ENCODE measurements at regions of chr4 and their contacts with region 1.

Region 1: GRCh38 chr4:145936142-145936996 is 2.3 kb downstream of the ZNF827 start:
- DNase-seq: peak; percentile 74
- H3K4me3 Mint-ChIP-seq: peak overlapping the region; percentile 80
- H3K27ac Mint-ChIP-seq: peak overlapping the region; percentile 95
- H3K4me1 Mint-ChIP-seq: peaks cover 35% of the 10 kb centered on the region
- H3K27me3 Mint-ChIP-seq: no peaks in the 10 kb centered on the region
- CTCF ChIP-seq: no peak

Region 2: DNA sequence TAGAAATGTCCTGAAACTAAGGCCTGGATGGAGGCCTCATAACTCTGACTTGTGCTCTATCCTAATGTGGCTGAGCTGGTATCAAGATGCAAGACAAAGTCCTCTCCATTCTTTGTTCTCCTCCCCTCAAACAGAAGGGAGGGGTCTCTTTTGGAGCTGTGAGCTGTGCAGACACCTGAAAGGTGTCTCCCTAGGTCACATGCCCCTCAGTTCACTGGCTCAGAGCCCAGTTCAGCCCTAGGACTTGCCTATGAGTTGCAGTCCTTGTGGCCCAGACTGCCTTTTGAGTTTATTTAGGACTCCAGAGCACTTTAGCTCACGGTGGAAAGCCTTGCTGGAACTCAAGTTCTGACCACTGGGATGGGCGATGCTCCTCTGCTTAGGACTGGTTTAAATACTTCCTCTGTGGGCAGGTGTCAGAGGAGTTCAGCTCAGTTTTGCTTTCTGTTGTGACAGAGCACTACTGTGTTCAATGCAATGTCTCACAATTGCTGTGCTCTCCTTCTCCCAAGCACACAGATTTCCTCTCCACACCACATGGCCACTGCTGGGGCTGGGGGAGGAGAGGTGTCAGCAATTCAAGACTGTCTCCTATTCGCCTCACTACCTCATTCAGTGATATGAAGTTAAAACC is 87.1 kb after region 1 on chr4:
- CTCF ChIA-PET with region 1: no interaction called
- intact Hi-C with region 1: no loop called
- DNase-seq: no peak
- H3K4me3 Mint-ChIP-seq: no peak overlapping the region
- H3K27ac Mint-ChIP-seq: no peak overlapping the region
- H3K4me1 Mint-ChIP-seq: no peaks in the 10 kb centered on the region
- H3K27me3 Mint-ChIP-seq: no peaks in the 10 kb centered on the region
- CTCF ChIP-seq: no peak

Region 3: GRCh38 chr4:146175541-146176453 is 239.4 kb after region 1 on chr4 and contains the start of gene LSM6:
- CTCF ChIA-PET with region 1: no interaction called
- intact Hi-C with region 1: loop called (anchors 10 kb)
- DNase-seq: peak; percentile 77
- H3K4me3 Mint-ChIP-seq: peak within 1 kb of the TSS; percentile 68
- H3K27ac Mint-ChIP-seq: peak within 1 kb of the TSS; percentile 69
- H3K4me1 Mint-ChIP-seq: peaks cover 8% of the 10 kb centered on the region
- H3K27me3 Mint-ChIP-seq: no peaks in the 10 kb centered on the region
- CTCF ChIP-seq: no peak
- total RNA-seq, gene LSM6: 30.7 and 37.1 TPM in 2 replicates